Dendritic cell treated with granulocyte-macrophage colony-stimulating factor and Interleukin-4, amounts not matched to agents 40 ng/mL and 50 ng/mL, for 4 days (primary cell): ENCODE measurements at regions of chr3 and their contacts with region 1.

Region 1: GRCh38 chr3:148309390-148310035 is 388.2 kb upstream of the AGTR1 start:
- H3K4me3 Mint-ChIP-seq: no peak overlapping the region
- H3K27ac Mint-ChIP-seq: no peak overlapping the region
- H3K4me1 Mint-ChIP-seq: no peaks in the 10 kb centered on the region
- H3K27me3 Mint-ChIP-seq: peaks cover 4% of the 10 kb centered on the region

Region 2: GRCh38 chr3:148366743-148367410 is 57.4 kb after region 1 on chr3:
- intact Hi-C with region 1: loop called (anchors 1 kb)
- H3K4me3 Mint-ChIP-seq: no peak overlapping the region
- H3K27ac Mint-ChIP-seq: no peak overlapping the region
- H3K4me1 Mint-ChIP-seq: no peaks in the 10 kb centered on the region
- H3K27me3 Mint-ChIP-seq: no peaks in the 10 kb centered on the region

Region 3: DNA sequence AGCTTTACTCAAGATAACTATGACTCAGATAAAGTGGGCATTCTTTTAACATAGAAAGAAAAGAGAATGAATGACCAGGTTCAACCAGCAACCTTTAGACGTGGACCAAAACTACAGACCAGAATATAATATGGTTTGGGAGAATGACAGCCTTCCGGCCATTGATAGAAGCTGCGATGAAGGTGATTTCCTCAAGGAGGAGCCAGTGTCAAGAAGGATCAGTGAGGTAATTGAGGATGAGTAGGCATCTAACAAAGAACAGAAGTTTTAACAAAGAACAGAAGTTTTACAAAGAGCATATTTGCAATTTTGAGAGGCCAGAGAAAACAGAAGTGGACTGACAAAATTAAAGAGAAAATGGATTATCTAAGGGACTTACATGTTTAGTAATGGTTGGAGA is 99.2 kb after region 1 on chr3:
- intact Hi-C with region 1: no loop called
- H3K4me3 Mint-ChIP-seq: no peak overlapping the region
- H3K27ac Mint-ChIP-seq: no peak overlapping the region
- H3K4me1 Mint-ChIP-seq: no peaks in the 10 kb centered on the region
- H3K27me3 Mint-ChIP-seq: no peaks in the 10 kb centered on the region

Region 4: GRCh38 chr3:148459931-148460513 is 150.5 kb after region 1 on chr3:
- intact Hi-C with region 1: loop called (anchors 2 kb)
- H3K4me3 Mint-ChIP-seq: no peak overlapping the region
- H3K27ac Mint-ChIP-seq: no peak overlapping the region
- H3K4me1 Mint-ChIP-seq: no peaks in the 10 kb centered on the region
- H3K27me3 Mint-ChIP-seq: no peaks in the 10 kb centered on the region

Region 5: DNA sequence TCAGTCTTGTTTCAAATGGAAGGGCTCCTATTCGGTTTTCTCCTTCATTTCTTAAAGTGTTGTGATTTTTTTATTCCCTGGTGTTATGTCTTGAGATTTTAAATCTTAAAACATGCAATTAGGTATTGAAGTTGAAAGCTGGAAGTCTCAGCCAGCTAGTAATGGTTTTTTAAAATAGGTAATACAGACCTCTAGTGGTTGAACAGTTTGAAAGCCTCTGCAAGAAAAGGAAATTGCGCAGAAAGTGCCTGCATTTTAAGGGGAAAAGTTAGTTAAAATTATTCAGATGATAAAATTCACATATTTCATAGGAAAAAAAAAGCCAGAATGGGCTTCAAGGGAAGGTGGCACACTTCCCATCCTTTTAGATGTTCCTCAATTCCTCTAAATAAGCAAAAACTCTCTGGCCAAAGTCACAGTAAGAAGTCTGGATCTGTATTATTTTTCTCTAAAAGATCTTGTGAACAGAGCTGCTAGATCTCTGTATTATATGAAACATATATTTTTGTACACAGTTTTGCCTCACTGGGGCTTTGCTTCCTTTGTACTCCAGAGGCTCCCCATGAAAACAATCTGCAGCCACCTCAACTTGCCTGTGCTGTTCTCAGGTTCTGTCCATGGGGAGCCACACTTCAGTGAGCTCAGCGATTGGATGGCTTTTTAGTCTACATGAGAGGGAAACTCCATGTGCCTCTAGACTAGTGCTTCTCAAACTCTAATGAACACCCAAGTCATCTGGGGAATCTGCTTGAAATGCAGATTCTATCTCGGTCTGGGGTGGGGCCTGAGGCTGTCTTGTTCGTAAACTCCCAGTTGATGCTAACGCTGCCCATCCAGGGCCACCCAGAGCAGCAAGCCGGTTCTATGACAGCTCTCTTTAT is 409.7 kb after region 1 on chr3:
- intact Hi-C with region 1: loop called (anchors 10 kb)
- H3K4me3 Mint-ChIP-seq: no peak overlapping the region
- H3K27ac Mint-ChIP-seq: no peak overlapping the region
- H3K4me1 Mint-ChIP-seq: no peaks in the 10 kb centered on the region
- H3K27me3 Mint-ChIP-seq: peaks cover 12% of the 10 kb centered on the region

Region 6: DNA sequence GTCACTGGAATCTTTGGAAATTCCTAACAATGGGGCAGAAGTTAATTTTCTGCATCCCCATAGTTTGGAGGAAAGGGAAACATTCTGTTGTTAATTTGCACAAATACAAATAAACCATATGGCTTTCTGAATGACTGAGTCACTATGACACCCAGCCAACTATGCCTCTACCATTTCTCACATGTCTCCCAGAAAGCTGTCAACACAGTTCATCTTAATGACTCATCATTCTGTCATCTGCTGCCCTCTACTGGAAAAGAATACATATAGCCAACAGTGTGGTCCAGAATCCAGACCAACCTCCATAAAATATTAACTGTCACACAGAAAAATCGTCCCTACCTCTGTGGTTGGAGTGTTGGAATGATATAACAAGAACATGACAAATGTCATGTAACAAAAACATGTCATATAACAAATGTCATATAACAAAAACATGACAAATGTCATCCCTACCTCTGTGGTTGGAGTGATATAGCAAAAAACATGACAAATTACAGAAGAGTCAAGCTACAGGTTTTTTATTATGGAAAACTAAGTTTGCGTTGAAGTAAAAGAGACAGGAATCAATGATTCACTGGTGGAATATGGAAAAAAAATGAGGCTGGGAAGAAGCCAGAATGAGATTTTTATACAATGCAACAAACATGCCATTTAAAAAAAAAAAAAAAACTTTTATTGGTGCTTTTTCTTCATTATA is 634.1 kb after region 1 on chr3:
- intact Hi-C with region 1: loop called (anchors 2 kb)
- H3K4me3 Mint-ChIP-seq: no peak overlapping the region
- H3K27ac Mint-ChIP-seq: no peak overlapping the region
- H3K4me1 Mint-ChIP-seq: no peaks in the 10 kb centered on the region
- H3K27me3 Mint-ChIP-seq: no peaks in the 10 kb centered on the region